ENCODE measurements at regions of chr16 and their contacts with region 1.

Region 1: DNA sequence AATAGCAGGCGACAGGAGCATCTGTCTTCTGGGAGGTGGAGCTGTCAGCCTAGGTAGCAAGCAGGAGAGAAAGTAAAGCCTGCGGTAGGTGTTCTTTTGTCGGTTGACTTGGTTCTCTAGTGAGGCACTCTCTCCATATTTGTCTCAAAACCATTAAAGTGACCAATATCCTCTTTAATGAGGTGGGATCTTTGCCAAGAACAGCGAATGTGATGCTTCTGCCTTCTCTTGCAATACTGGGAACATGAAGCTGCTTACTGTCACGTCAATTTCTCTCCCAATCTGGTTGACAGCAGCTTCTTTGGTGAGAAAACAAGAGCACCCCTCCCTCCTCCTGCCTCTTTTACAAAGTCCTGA is 176.7 kb downstream of the ABCC12 start:
- DNase-seq: no peak
- ATAC-seq: no peak
- H3K4me3 ChIP-seq: no peak overlapping the region
- H3K27ac ChIP-seq: no peak overlapping the region
- H3K4me1 ChIP-seq: no peaks in the 10 kb centered on the region
- H3K27me3 ChIP-seq: no peaks in the 10 kb centered on the region
- CTCF ChIP-seq: no peak
- EP300 ChIP-seq: no peak
- POLR2A ChIP-seq: no peak
- RAD21 ChIP-seq: no peak

Region 2: GRCh38 chr16:47990676-47991075 is 11.5 kb after region 1 on chr16:
- CTCF ChIA-PET with region 1: no interaction called
- POLR2A ChIA-PET with region 1: no interaction called
- RAD21 ChIA-PET with region 1: interaction called, 3 read pairs
- SMC1A ChIA-PET with region 1: interaction called, 11 read pairs
- in situ Hi-C with region 1: no loop called
- intact Hi-C with region 1: no loop called
- DNase-seq: no peak
- ATAC-seq: no peak
- H3K4me3 ChIP-seq: no peak overlapping the region
- H3K27ac ChIP-seq: no peak overlapping the region
- H3K4me1 ChIP-seq: no peaks in the 10 kb centered on the region
- H3K27me3 ChIP-seq: no peaks in the 10 kb centered on the region
- CTCF ChIP-seq: no peak
- EP300 ChIP-seq: no peak
- POLR2A ChIP-seq: no peak
- RAD21 ChIP-seq: no peak

Measured in GM12878 (cell line).